Activated T-helper 1 cell treated with anti-CD3 and anti-CD28 coated beads, Interleukin-12 subunit alpha, Interleukin-12 subunit beta, Interleukin-2, Interleukin-4 antibody, amounts not matched to agents 30 ng/mL and 10 ng/mL and 1 ng/mL, durations not matched to agents 14 hours and 24 hours and 36 hours (primary cell): ENCODE measurements at regions of chr6 and their contacts with region 1.

Region 1: GRCh38 chr6:17633465-17634188 is 33.5 kb downstream of the FAM8A1 start:
- DNase-seq: peak; percentile 21
- H3K4me3 Mint-ChIP-seq: peak overlapping the region; percentile 13
- H3K27ac Mint-ChIP-seq: peak overlapping the region; percentile 80
- H3K4me1 Mint-ChIP-seq: peaks cover 55% of the 10 kb centered on the region
- H3K27me3 Mint-ChIP-seq: no peaks in the 10 kb centered on the region

Region 2: DNA sequence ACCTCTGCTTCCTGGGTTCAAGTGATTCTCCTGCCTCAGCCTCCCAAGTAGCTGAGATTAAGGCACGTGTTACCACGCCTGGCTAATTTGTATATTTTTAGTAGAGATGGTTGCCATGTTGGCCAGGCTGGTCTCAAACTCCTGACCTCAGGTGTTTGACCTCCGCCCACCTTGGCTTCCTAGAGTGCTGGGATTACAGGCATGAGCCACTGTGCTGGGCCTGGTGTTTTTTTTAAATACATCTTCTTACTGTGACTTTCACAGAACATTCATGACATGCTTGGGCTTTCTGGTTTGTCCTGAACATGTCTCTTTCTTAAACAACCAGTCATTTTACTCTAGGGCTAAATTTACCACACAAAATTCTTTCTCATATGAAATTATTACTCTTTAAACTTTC is 68.2 kb before region 1 on chr6:
- intact Hi-C with region 1: no loop called
- DNase-seq: no peak
- H3K4me3 Mint-ChIP-seq: no peak overlapping the region
- H3K27ac Mint-ChIP-seq: no peak overlapping the region
- H3K4me1 Mint-ChIP-seq: no peaks in the 10 kb centered on the region
- H3K27me3 Mint-ChIP-seq: peaks cover 5% of the 10 kb centered on the region

Region 3: GRCh38 chr6:17656092-17656491 is 22.5 kb after region 1 on chr6:
- intact Hi-C with region 1: loop called (anchors 2 kb)
- DNase-seq: no peak
- H3K4me3 Mint-ChIP-seq: no peak overlapping the region
- H3K27ac Mint-ChIP-seq: peak overlapping the region; percentile 70
- H3K4me1 Mint-ChIP-seq: peaks cover 35% of the 10 kb centered on the region
- H3K27me3 Mint-ChIP-seq: no peaks in the 10 kb centered on the region

Region 4: GRCh38 chr6:17673543-17674254 is 40.1 kb after region 1 on chr6:
- intact Hi-C with region 1: loop called (anchors 1 kb)
- DNase-seq: no peak
- H3K4me3 Mint-ChIP-seq: no peak overlapping the region
- H3K27ac Mint-ChIP-seq: peak overlapping the region; percentile 87
- H3K4me1 Mint-ChIP-seq: peaks cover 21% of the 10 kb centered on the region
- H3K27me3 Mint-ChIP-seq: no peaks in the 10 kb centered on the region